ENCODE measurements at regions of chr7 and their contacts with region 1.

Region 1: GRCh38 chr7:130491841-130492522 is at the start of gene MEST:
- DNase-seq: peak; percentile 21
- H3K4me3 ChIP-seq: peak within 1 kb of the TSS in 2 of 3 experiments; percentile 29 to 55
- H3K27ac ChIP-seq: no peak within 1 kb of the TSS
- H3K4me1 ChIP-seq: peaks cover 30% of the 10 kb centered on the region
- H3K27me3 ChIP-seq: no peaks in the 10 kb centered on the region
- CTCF ChIP-seq: no peak
- POLR2A ChIP-seq: peak; percentile 57
- total RNA-seq, gene MEST: 52.6 and 62.1 TPM in 2 replicates

Region 2: GRCh38 chr7:130205084-130205947 is 286.7 kb before region 1 on chr7 and contains the start of gene TMEM209:
- CTCF ChIA-PET with region 1: interaction called, 4 read pairs
- POLR2A ChIA-PET with region 1: no interaction called
- dilution Hi-C with region 1: no loop called
- intact Hi-C with region 1: loop called (anchors 2 kb)
- DNase-seq: peak; percentile 98
- H3K4me3 ChIP-seq: peak within 1 kb of the TSS; percentile 83 to 99 (median 91)
- H3K27ac ChIP-seq: peak within 1 kb of the TSS; percentile 95
- H3K4me1 ChIP-seq: peaks cover 8% of the 10 kb centered on the region
- H3K27me3 ChIP-seq: no peaks in the 10 kb centered on the region
- CTCF ChIP-seq: no peak
- POLR2A ChIP-seq: peak; percentile 83
- total RNA-seq, gene TMEM209: 11.6 and 16.6 TPM in 2 replicates

Region 3: GRCh38 chr7:130277763-130278643 is 214.0 kb before region 1 on chr7:
- CTCF ChIA-PET with region 1: interaction called, 8 read pairs
- POLR2A ChIA-PET with region 1: no interaction called
- dilution Hi-C with region 1: no loop called
- intact Hi-C with region 1: loop called (anchors 2 kb)
- DNase-seq: peak; percentile 58
- H3K4me3 ChIP-seq: no peak overlapping the region
- H3K27ac ChIP-seq: no peak overlapping the region
- H3K4me1 ChIP-seq: no peaks in the 10 kb centered on the region
- H3K27me3 ChIP-seq: peaks cover 5 to 18% of the 10 kb centered on the region in 2 experiments
- CTCF ChIP-seq: peak; percentile 36 to 57
- POLR2A ChIP-seq: no peak

Region 4: DNA sequence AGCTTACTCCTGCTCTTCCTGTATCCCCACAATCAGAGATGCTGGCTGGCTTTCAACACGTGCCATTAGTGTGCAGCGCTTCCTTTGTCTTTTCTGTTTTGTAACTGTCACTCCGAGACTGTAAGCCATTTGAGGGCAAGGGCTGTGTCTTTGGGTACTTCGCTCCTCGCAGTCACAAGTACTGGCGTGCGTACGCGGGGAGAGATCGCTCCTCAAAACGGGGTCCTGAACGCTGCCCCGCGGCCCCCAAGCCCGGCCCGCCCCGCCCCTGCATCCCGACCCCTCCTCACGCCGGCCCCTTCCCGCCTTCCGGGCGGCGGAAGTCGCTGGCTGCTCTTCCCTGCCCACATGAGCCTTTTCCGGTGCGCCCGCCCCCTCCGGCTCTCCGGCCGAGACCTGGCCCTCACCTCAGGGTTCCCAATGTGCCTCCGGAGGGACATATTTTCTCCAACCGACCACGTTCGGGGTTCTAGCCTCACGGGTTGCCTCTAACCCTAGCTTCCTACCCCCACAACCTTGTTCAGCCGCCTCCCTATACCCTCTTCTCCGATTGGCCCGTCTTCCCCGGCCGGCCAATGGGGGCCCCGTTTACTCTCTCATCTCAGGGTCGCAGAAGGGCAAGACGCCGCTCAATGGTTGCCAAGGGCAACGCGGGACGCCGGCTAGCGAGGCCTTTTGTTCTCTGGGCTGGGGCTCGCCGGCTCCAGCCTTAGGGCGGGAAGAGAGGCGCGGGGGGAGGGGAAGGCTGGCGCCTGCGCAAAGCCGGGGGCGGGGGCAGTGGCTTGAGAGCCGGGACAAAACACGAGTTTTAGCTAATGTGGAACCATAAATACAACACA is 51.2 kb before region 1 on chr7 and contains the start of gene CEP41:
- CTCF ChIA-PET with region 1: no interaction called
- POLR2A ChIA-PET with region 1: no interaction called
- dilution Hi-C with region 1: no loop called
- intact Hi-C with region 1: loop called (anchors 1 kb)
- DNase-seq: peak; percentile 99
- H3K4me3 ChIP-seq: peak within 1 kb of the TSS; percentile 61 to 79 (median 63)
- H3K27ac ChIP-seq: peak within 1 kb of the TSS; percentile 87
- H3K4me1 ChIP-seq: peaks cover 12% of the 10 kb centered on the region
- H3K27me3 ChIP-seq: no peaks in the 10 kb centered on the region
- CTCF ChIP-seq: no peak
- POLR2A ChIP-seq: peak; percentile 35
- total RNA-seq, gene CEP41: 25.9 and 26.8 TPM in 2 replicates

Region 5: GRCh38 chr7:130463553-130464434 is 28.2 kb before region 1 on chr7:
- CTCF ChIA-PET with region 1: no interaction called
- POLR2A ChIA-PET with region 1: no interaction called
- dilution Hi-C with region 1: no loop called
- intact Hi-C with region 1: no loop called
- DNase-seq: peak; percentile 85
- H3K4me3 ChIP-seq: no peak overlapping the region
- H3K27ac ChIP-seq: no peak overlapping the region
- H3K4me1 ChIP-seq: no peaks in the 10 kb centered on the region
- H3K27me3 ChIP-seq: peaks cover 0 to 3% of the 10 kb centered on the region in 2 experiments
- CTCF ChIP-seq: no peak
- POLR2A ChIP-seq: no peak

Region 6: GRCh38 chr7:130560970-130561369 is 69.0 kb after region 1 on chr7:
- CTCF ChIA-PET with region 1: no interaction called
- POLR2A ChIA-PET with region 1: no interaction called
- dilution Hi-C with region 1: no loop called
- intact Hi-C with region 1: loop called (anchors 2 kb)
- DNase-seq: peak; percentile 48
- H3K4me3 ChIP-seq: no peak overlapping the region
- H3K27ac ChIP-seq: no peak overlapping the region
- H3K4me1 ChIP-seq: no peaks in the 10 kb centered on the region
- H3K27me3 ChIP-seq: no peaks in the 10 kb centered on the region
- CTCF ChIP-seq: no peak
- POLR2A ChIP-seq: no peak

Measured in endothelial cell of umbilical vein (primary cell).